ENCODE measurements at regions of chr17 and their contacts with region 1.

Region 1: DNA sequence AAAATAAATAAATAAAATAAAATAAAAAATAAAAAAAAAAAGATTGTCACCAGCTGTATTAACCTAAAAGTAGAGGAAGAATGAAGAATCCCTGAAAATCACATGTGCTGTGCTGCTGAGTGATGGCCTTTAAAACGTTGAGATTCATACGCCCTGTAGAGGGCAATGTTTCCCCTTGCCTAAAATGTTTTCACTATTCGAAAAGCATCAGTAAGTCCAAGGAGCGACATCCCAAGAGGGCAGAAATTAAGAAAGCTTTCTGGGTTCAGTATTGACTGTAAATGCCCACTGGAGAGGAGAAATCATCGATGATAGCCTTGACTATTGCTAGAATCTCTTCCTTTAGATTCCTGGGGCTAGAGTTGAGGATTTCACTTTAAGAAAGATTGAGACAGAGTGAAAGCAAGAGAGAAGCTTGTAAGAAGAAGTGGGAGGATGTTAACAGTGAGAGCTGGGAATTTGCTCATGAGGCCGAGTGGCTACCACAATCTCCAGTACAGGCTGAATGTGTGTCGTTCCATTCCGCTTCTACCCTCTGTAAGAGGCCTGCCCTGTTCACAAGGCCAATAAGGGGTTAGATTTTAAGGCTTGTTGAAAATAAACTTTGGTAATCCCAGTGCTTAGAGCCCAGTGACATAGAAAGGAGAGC is 170.8 kb upstream of the FAM20A start:
- DNase-seq: peak; percentile 80
- H3K4me3 ChIP-seq: peak overlapping the region; percentile 21
- H3K27ac ChIP-seq: no peak overlapping the region
- H3K4me1 ChIP-seq: peaks cover 22% of the 10 kb centered on the region
- CTCF ChIP-seq: peak; percentile 90

Region 2: DNA sequence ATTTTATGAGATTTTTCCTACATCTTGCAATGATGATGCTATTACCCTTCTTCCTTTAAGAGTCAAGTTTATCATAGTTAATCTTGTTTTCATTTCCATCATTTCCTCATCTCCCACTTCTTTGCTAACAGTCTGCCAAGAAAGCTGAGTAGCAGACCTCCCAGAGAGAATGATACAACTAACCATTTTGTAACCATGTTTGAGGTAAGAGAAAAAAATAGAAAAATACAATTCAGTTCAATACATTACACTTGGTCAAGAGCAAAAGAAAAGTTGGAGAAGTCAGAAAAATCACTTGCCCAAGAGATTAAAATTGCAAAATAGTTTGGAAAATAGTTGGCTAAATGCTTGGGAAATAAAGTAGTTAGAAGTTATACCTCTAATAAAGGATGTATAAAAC is 28.8 kb after region 1 on chr17:
- CTCF ChIA-PET with region 1: no interaction called
- POLR2A ChIA-PET with region 1: no interaction called
- intact Hi-C with region 1: no loop called
- DNase-seq: no peak
- H3K4me3 ChIP-seq: no peak overlapping the region
- H3K27ac ChIP-seq: no peak overlapping the region
- H3K4me1 ChIP-seq: no peaks in the 10 kb centered on the region
- CTCF ChIP-seq: no peak

Region 3: GRCh38 chr17:68906638-68907037 is 134.6 kb after region 1 on chr17:
- CTCF ChIA-PET with region 1: no interaction called
- POLR2A ChIA-PET with region 1: no interaction called
- intact Hi-C with region 1: loop called (anchors 2 kb)
- DNase-seq: peak; percentile 19
- H3K4me3 ChIP-seq: no peak overlapping the region
- H3K27ac ChIP-seq: no peak overlapping the region
- H3K4me1 ChIP-seq: no peaks in the 10 kb centered on the region
- CTCF ChIP-seq: peak; percentile 76

Region 4: GRCh38 chr17:69060822-69061221 is 288.8 kb after region 1 on chr17 and contains the start of gene ABCA9:
- CTCF ChIA-PET with region 1: no interaction called
- POLR2A ChIA-PET with region 1: no interaction called
- intact Hi-C with region 1: loop called (anchors 10 kb)
- DNase-seq: no peak
- H3K4me3 ChIP-seq: peak within 1 kb of the TSS; percentile 20
- H3K27ac ChIP-seq: no peak within 1 kb of the TSS
- H3K4me1 ChIP-seq: peaks cover 28% of the 10 kb centered on the region
- CTCF ChIP-seq: no peak
- total RNA-seq, gene ABCA9: 0.47 and 0.88 TPM in 2 replicates

Region 5: DNA sequence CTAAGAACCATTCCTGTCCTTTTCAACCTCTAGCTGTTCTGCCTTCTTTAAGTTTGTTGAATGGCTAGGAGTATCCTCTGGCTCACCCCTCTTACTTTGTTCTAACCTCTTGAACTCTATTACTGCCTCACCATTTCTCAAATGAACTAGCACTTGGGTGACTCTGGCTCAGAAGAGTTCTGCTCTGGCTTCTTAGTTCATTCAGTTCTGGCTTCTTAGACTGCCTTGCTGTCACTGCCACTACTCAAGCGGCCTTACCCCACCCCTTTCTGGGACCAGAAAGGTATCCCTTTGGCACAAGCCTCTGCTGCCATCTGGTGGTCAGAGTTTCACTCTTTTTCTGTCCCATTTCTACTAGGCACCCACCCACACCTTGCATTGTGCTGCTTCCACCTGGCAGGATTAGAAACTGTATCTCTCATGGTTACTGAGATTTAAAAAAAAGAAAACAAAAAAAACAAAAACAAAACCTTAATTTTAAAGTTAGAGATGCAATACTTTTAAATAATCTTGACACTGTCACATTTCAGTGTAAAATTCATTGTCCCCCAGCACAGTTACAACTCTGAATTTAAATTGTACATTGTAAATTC is 463.4 kb after region 1 on chr17:
- CTCF ChIA-PET with region 1: interaction called, 6 read pairs
- POLR2A ChIA-PET with region 1: interaction called, 3 read pairs
- intact Hi-C with region 1: loop called (anchors 1 kb)
- DNase-seq: peak; percentile 94
- H3K4me3 ChIP-seq: no peak overlapping the region
- H3K27ac ChIP-seq: no peak overlapping the region
- H3K4me1 ChIP-seq: no peaks in the 10 kb centered on the region
- CTCF ChIP-seq: peak; percentile 100

Region 6: GRCh38 chr17:69501591-69502468 is 729.8 kb after region 1 on chr17:
- CTCF ChIA-PET with region 1: no interaction called
- POLR2A ChIA-PET with region 1: no interaction called
- intact Hi-C with region 1: loop called (anchors 5 kb)
- DNase-seq: peak; percentile 61
- H3K4me3 ChIP-seq: peak overlapping the region; percentile 50
- H3K27ac ChIP-seq: peak overlapping the region; percentile 67
- H3K4me1 ChIP-seq: peaks cover 55% of the 10 kb centered on the region
- CTCF ChIP-seq: no peak

Measured in OCI-LY7 (cell line).